ENCODE measurements at regions of chr20 and their contacts with region 1.

Region 1: DNA sequence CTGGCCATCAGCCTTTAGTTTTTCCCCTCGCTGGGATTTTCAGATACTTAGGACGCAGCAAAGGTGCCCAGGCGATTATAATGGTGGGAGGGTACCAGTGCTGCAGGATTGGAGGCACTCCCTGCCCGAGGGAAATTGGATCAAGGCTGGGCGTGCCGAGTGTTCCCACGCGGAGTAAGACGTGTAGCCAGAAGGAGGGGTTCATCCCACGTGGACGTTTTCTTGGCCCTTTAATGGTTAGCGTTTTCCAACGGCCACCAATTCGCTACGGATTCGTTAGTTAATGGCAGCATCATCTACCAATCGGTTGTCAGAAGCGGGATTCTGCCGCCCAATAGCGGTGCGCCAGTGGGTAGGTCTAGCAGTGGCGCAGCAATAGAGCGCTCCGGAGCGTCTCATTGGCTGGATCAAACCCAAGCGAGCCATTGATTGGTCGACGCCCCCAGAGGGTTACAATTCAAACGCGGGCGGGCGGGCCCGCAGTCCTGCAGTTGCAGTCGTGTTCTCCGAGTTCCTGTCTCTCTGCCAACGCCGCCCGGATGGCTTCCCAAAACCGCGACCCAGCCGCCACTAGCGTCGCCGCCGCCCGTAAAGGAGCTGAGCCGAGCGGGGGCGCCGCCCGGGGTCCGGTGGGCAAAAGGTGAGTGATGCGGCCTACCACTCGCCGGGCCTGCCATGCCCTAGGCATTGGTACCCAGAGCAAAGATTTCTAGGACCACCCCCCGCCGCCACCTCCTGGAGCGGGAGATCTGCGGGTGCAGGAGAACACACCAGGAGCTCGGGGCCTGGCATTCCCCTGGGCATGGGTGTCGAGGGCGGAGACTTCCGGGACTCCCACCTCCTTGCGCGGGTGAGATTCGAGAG is at the start of gene UBE2C:
- DNase-seq: peak; percentile 100
- H3K4me3 ChIP-seq: peak within 1 kb of the TSS; percentile 74 to 97 (median 94)
- H3K27ac ChIP-seq: peak within 1 kb of the TSS; percentile 79
- H3K4me1 ChIP-seq: peaks cover 13% of the 10 kb centered on the region
- H3K27me3 ChIP-seq: no peaks in the 10 kb centered on the region
- CTCF ChIP-seq: no peak
- total RNA-seq, gene UBE2C: 1.0 to 80.5 TPM

Region 2: DNA sequence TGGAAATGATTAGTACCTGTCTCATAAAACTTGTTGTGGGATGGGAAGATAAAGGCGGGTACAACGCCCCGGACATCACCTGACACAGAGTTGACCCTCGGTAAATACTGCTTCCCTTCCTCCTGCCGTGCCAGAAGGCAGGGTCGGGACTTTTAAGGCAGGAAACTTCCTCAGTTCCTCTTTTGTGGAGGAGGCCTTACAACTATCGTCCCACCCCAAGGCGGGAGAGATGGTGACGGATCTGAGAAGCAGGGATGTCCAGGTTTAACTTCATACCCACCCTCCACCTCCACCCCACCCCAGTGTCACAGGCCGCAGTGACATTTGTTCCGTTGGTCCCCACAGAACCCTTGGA is 20.1 kb before region 1 on chr20:
- CTCF ChIA-PET with region 1: no interaction called
- dilution Hi-C with region 1: no loop called
- in situ Hi-C with region 1: no loop called
- intact Hi-C with region 1: loop called (anchors 1 kb)
- DNase-seq: peak; percentile 19
- H3K4me3 ChIP-seq: peak overlapping the region; percentile 71 to 93 (median 92)
- H3K27ac ChIP-seq: peak overlapping the region; percentile 90
- H3K4me1 ChIP-seq: peaks cover 18% of the 10 kb centered on the region
- H3K27me3 ChIP-seq: no peaks in the 10 kb centered on the region
- CTCF ChIP-seq: no peak

Region 3: DNA sequence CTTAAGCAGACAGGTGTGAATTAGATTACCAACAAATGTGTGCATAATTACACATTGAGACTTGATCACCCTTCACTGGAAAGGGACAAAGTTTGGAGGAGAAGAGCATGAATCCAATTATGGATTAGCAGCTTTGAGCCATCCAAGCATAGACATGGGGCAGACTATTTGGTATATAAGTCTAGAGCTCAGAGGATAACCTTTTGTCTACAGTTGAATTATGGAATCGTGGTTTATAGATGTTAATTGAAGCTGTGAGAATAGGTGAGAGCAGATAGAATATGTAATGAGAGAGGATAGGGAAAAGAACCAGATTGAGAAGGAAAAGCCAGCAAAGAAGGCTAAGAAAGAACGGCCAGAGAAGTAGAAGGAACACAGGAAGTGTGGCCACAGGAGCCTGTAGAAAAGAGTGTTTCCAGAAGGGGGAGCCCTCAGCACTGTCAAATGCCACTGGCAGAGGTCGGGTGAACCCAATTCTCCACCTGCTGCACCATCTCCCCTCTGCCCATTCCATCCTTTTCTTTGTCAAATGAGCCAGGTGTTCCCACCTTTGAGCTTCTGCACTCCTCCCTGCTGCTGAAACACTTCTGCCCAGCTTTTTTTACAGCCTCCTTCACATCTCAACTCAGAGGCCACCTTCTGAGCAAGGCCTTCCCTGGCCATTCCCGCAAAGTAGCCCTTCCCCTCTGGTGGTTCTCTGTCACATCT is 13.3 kb before region 1 on chr20:
- CTCF ChIA-PET with region 1: interaction called, 29 read pairs
- dilution Hi-C with region 1: no loop called
- in situ Hi-C with region 1: no loop called
- intact Hi-C with region 1: no loop called
- DNase-seq: peak; percentile 37
- H3K4me3 ChIP-seq: no peak overlapping the region
- H3K27ac ChIP-seq: no peak overlapping the region
- H3K4me1 ChIP-seq: no peaks in the 10 kb centered on the region
- H3K27me3 ChIP-seq: no peaks in the 10 kb centered on the region
- CTCF ChIP-seq: peak; percentile 76

Region 4: DNA sequence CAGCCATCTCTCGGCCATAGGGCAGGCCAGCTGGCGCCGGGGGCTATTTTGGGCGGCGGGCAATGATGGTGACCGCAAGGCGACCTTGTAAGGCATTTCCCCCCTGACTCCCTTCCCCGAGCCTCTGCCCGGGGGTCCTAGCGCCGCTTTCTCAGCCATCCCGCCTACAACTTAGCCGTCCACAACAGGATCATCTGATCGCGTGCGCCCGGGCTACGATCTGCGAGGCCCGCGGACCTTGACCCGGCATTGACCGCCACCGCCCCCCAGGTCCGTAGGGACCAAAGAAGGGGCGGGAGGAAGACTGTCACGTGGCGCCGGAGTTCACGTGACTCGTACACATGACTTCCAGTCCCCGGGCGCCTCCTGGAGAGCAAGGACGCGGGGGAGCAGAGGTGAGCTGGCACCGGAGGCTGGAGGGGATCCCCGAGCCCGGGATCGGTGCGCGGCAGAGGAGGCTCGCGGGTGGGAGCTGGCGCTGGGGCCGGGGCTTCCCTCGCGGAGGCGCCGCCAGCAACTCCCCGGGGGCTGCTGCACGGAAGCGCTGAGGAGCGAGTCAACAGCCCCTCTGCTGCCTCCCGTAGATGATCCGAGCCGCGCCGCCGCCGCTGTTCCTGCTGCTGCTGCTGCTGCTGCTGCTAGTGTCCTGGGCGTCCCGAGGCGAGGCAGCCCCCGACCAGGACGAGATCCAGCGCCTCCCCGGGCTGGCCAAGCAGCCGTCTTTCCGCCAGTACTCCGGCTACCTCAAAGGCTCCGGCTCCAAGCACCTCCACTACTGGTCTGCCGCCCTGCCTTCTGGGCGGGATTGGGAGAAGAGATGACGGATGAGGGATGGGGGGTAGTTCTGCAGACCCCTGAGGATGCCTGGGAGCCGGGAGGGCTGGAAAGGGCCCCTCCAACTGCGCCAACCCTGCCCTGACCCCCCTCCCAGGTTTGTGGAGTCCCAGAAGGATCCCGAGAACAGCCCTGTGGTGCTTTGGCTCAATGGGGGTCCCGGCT is 78.9 kb after region 1 on chr20 and contains the starts of genes CTSA and NEURL2:
- CTCF ChIA-PET with region 1: no interaction called
- dilution Hi-C with region 1: loop called (anchors 5 kb)
- in situ Hi-C with region 1: no loop called
- intact Hi-C with region 1: no loop called
- DNase-seq: peak; percentile 80
- H3K4me3 ChIP-seq: peak within 1 kb of the TSS; percentile 75 to 93 (median 89)
- H3K27ac ChIP-seq: peak within 1 kb of the TSS; percentile 22
- H3K4me1 ChIP-seq: peaks cover 30% of the 10 kb centered on the region
- H3K27me3 ChIP-seq: no peaks in the 10 kb centered on the region
- CTCF ChIP-seq: no peak
- total RNA-seq, gene CTSA: 32.5 to 68.8 TPM
- total RNA-seq, gene NEURL2: 2.1 to 3.3 TPM

Region 5: DNA sequence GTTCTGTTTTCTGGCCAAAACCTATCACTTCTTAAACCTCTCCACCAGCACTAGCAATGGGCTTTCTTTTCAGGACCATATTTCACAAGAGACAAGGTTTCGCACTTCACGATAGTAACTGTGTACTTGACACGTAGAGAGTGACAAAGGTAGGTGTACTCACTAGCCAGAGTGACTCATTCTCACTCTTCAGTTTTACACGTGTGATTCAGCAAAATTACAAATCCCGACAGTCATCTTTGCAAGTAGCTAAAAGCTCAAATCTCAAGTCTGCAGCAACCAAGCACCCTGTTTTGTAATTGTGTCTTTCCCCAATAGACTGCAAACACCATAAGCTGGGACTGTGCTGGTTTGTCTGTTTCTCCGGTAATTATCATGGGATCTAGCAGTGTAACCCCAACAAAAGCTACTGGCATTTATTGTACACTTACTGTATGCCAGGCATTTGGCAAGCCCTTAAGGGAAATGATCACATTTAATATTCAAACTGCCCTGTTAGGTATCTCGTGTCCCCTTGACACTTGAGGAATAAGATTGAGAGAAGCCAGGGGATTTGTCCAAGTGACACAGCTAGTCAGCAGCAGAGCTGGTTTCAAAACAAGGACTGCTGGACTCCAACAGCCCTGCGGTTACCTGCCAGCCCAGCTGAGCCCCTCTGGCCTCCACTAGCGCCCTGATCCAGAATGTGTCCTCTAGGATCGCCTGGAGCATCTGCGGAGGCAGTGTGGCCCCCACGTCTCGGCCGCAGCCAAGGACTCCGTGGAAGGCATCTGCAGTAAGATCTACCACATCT is 132.0 kb after region 1 on chr20:
- CTCF ChIA-PET with region 1: no interaction called
- dilution Hi-C with region 1: loop called (anchors 5 kb)
- in situ Hi-C with region 1: no loop called
- intact Hi-C with region 1: no loop called
- DNase-seq: peak; percentile 78
- H3K4me3 ChIP-seq: no peak overlapping the region
- H3K27ac ChIP-seq: no peak overlapping the region
- H3K4me1 ChIP-seq: peaks cover 16% of the 10 kb centered on the region
- H3K27me3 ChIP-seq: no peaks in the 10 kb centered on the region
- CTCF ChIP-seq: no peak

Region 6: GRCh38 chr20:45963059-45964005 is 150.9 kb after region 1 on chr20:
- CTCF ChIA-PET with region 1: no interaction called
- dilution Hi-C with region 1: no loop called
- in situ Hi-C with region 1: loop called in 1 of 2 experiments (anchors 10 kb)
- intact Hi-C with region 1: no loop called
- DNase-seq: no peak
- H3K4me3 ChIP-seq: no peak overlapping the region
- H3K27ac ChIP-seq: no peak overlapping the region
- H3K4me1 ChIP-seq: no peaks in the 10 kb centered on the region
- H3K27me3 ChIP-seq: no peaks in the 10 kb centered on the region
- CTCF ChIP-seq: peak; percentile 39 to 45

Region 7: GRCh38 chr20:46089417-46090388 is 277.3 kb after region 1 on chr20 and contains the start of gene NCOA5:
- CTCF ChIA-PET with region 1: no interaction called
- dilution Hi-C with region 1: no loop called
- in situ Hi-C with region 1: loop called in 1 of 2 experiments (anchors 25 kb)
- intact Hi-C with region 1: loop called (anchors 5 kb)
- DNase-seq: peak; percentile 94
- H3K4me3 ChIP-seq: peak within 1 kb of the TSS; percentile 91 to 94 (median 91)
- H3K27ac ChIP-seq: peak within 1 kb of the TSS; percentile 87
- H3K4me1 ChIP-seq: peaks cover 20% of the 10 kb centered on the region
- H3K27me3 ChIP-seq: no peaks in the 10 kb centered on the region
- CTCF ChIP-seq: peak; percentile 9 to 48
- total RNA-seq, gene NCOA5: 11.2 to 17.8 TPM